ENCODE measurements at regions of chr12 and their contacts with region 1.

Region 1: GRCh38 chr12:121529184-121529583 is 51.6 kb downstream of the KDM2B start:
- DNase-seq: no peak
- H3K4me3 ChIP-seq: no peak overlapping the region
- H3K4me3 Mint-ChIP-seq: no peak overlapping the region
- H3K27ac ChIP-seq: no peak overlapping the region
- H3K27ac Mint-ChIP-seq: no peak overlapping the region
- H3K4me1 ChIP-seq: peaks cover 17 to 18% of the 10 kb centered on the region in 2 donors
- H3K4me1 Mint-ChIP-seq: peaks cover 23% of the 10 kb centered on the region
- H3K27me3 ChIP-seq: no peaks in the 10 kb centered on the region
- H3K27me3 Mint-ChIP-seq: no peaks in the 10 kb centered on the region
- CTCF ChIP-seq: no peak

Region 2: GRCh38 chr12:121511916-121512315 is 17.3 kb before region 1 on chr12:
- intact Hi-C with region 1: loop called in 1 of 2 experiments (anchors 2 kb)
- DNase-seq: no peak
- H3K4me3 ChIP-seq: no peak overlapping the region
- H3K4me3 Mint-ChIP-seq: no peak overlapping the region
- H3K27ac ChIP-seq: no peak overlapping the region
- H3K27ac Mint-ChIP-seq: peak overlapping the region in 1 of 7 donors; percentile 14
- H3K4me1 ChIP-seq: no peaks in the 10 kb centered on the region
- H3K4me1 Mint-ChIP-seq: peaks cover 5% of the 10 kb centered on the region
- H3K27me3 ChIP-seq: no peaks in the 10 kb centered on the region
- H3K27me3 Mint-ChIP-seq: peaks cover 0 to 2% (median 0%) of the 10 kb centered on the region in 3 donors
- CTCF ChIP-seq: no peak

Measured in CD14-positive monocyte (primary cell).